Thyroid gland (tissue), 4 donors: ENCODE measurements at regions of chr2 and their contacts with region 1.

Region 1: DNA sequence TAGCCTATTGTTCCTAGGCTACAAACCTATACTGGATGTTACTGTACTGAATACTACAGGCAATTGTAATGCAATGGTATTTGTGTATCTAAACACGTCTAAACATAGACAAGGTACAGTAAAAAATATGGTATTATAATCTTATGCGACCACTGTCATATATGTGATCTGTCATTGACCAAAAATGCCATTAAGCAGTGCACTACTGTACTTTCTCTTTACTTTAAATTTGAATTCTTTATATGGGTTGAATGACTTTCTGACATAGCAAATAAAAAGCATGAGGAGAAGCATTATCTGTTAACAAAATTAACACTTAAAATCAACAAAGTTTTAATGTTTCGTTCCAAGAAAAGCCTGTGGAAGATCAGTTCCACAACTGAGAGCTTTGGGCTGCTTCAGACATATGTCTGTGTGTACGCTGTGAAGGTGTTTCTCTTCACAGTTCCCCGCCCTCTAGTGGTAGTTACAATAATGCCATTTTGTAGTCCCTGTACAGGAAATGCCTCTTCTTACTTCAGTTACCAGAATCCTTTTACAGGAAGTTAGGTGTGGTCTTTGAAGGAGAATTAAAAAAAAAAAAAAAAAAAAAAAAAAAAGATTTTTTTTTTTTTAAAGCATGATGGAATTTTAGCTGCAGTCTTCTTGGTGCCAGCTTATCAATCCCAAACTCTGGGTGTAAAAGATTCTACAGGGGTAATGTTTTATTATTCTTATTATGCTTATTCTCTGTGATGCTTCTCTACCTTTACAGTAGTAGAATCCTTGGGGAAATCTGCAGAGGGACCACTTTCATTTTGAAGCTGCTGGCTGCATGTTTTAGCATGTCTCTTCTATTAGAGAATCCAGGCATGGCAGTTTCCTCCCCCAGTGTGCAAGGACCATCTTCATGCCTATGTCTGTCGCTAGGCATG is 54.5 kb downstream of the SCN2A start:
- DNase-seq: peak; percentile 18 to 22
- H3K4me3 ChIP-seq: no peak overlapping the region
- H3K27ac ChIP-seq: no peak overlapping the region
- H3K4me1 ChIP-seq: peaks cover 0 to 3% of the 10 kb centered on the region in 2 donors
- H3K27me3 ChIP-seq: no peaks in the 10 kb centered on the region
- CTCF ChIP-seq: peak; percentile 37 to 74 (median 71)
- POLR2A ChIP-seq: no peak

Region 2: DNA sequence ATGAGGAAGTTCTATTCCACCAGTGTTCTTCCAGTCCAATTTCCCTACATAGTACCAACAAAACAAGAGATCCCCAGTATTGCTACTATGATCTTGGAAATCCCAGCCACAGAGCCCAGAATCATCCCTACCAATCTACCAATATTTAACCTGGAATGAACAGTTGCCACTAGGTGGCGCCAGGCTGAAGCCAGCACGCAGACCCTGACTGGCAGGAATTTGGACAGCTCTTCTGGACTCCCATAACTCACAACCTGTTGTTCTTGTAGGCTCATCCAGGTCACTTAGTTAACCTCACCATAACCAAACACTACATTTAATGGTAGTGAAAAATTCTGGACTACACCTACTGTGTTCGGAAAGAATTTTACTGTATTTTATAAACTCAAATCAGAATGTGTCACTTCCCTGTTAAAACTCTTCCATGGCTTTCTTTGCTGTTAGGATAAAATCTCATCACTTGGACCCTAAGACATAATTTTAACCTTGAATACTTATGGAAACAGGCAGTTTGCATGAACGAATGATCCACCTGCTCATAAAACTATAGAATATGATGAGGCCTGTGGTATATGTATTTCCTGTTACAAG is 278.6 kb before region 1 on chr2:
- intact Hi-C with region 1: loop called (anchors 10 kb)
- DNase-seq: peak; percentile 61 to 74
- H3K4me3 ChIP-seq: no peak overlapping the region
- H3K27ac ChIP-seq: no peak overlapping the region
- H3K4me1 ChIP-seq: no peaks in the 10 kb centered on the region
- H3K27me3 ChIP-seq: no peaks in the 10 kb centered on the region
- CTCF ChIP-seq: peak; percentile 45 to 88 (median 62)
- POLR2A ChIP-seq: no peak

Region 3: DNA sequence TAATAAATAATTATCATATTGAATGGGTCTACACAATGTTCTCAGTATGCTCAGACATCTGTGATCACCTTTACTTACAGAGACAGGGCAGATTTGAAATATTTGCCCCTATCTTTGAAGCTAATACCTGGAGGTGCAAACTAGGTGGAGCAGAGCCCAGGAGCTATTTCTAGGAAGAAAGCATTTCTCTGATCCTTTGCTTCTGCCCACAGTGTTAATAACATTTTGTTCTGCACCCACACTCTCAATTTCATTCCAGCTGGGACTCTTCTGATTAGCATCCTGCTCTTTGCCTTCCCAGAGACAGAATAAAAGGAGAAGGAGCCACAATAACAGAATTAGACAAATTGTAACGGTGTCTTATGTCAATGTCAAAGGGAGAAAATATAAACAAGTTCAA is 66.1 kb before region 1 on chr2:
- intact Hi-C with region 1: no loop called
- DNase-seq: no peak
- H3K4me3 ChIP-seq: no peak overlapping the region
- H3K27ac ChIP-seq: no peak overlapping the region
- H3K4me1 ChIP-seq: no peaks in the 10 kb centered on the region
- H3K27me3 ChIP-seq: no peaks in the 10 kb centered on the region
- CTCF ChIP-seq: no peak
- POLR2A ChIP-seq: no peak